ENCODE measurements at regions of chr4 and their contacts with region 1.

Region 1: DNA sequence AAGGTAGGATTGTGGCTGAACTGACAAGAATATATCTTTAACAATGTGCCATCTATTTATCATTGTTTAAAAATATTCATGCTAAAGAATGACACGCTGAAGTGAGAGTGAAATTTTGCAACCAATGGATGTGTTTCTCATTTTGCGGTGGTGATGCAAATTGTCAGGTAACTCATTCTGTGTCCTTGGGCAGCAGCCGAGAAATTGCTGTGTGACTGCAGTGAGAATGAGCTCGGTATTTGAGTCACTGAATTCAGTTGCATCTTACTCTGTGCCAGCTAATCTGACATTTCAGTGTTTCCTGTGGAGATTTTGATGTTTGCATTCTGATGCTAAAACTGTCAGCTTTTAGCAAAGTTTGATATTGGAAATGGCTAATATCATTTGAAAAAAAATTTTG is 28.1 kb downstream of the MCUB start:
- DNase-seq: peak; percentile 88
- H3K4me3 Mint-ChIP-seq: peak overlapping the region; percentile 46
- H3K27ac Mint-ChIP-seq: peak overlapping the region; percentile 78
- H3K4me1 Mint-ChIP-seq: peaks cover 85% of the 10 kb centered on the region
- H3K27me3 Mint-ChIP-seq: no peaks in the 10 kb centered on the region

Region 2: GRCh38 chr4:109233585-109233984 is 354.6 kb before region 1 on chr4:
- CTCF ChIA-PET with region 1: no interaction called
- intact Hi-C with region 1: no loop called
- DNase-seq: no peak
- H3K4me3 Mint-ChIP-seq: no peak overlapping the region
- H3K27ac Mint-ChIP-seq: no peak overlapping the region
- H3K4me1 Mint-ChIP-seq: no peaks in the 10 kb centered on the region
- H3K27me3 Mint-ChIP-seq: no peaks in the 10 kb centered on the region

Region 3: GRCh38 chr4:109601336-109601735 is 13.2 kb after region 1 on chr4:
- CTCF ChIA-PET with region 1: no interaction called
- intact Hi-C with region 1: loop called (anchors 1 kb)
- DNase-seq: no peak
- H3K4me3 Mint-ChIP-seq: no peak overlapping the region
- H3K27ac Mint-ChIP-seq: no peak overlapping the region
- H3K4me1 Mint-ChIP-seq: peaks cover 46% of the 10 kb centered on the region
- H3K27me3 Mint-ChIP-seq: no peaks in the 10 kb centered on the region

Region 4: DNA sequence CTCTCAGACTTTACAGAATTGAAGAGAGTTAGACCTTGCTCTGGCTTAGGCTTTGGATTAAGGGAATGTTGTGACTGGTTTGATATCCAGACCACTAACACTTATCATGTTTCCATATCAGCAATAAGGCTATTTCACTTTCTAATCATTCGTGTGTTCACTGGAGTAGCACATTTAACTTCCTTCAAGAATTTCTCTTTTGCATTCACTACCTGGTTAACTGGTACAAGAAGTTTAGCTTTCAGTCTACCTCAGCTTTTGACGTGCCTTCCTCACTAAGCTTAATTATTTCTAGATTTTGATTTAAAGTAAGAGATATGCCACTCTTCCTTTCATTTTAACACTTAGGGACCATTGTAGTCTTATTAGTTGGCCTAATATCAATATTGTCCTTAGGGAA is 52.5 kb after region 1 on chr4:
- CTCF ChIA-PET with region 1: interaction called, 3 read pairs
- intact Hi-C with region 1: loop called (anchors 1 kb)
- DNase-seq: no peak
- H3K4me3 Mint-ChIP-seq: no peak overlapping the region
- H3K27ac Mint-ChIP-seq: peak overlapping the region; percentile 72
- H3K4me1 Mint-ChIP-seq: peaks cover 48% of the 10 kb centered on the region
- H3K27me3 Mint-ChIP-seq: no peaks in the 10 kb centered on the region

Region 5: GRCh38 chr4:109702950-109703663 is 114.9 kb after region 1 on chr4 and contains the start of gene CASP6:
- CTCF ChIA-PET with region 1: no interaction called
- intact Hi-C with region 1: loop called (anchors 1 kb)
- DNase-seq: peak; percentile 76
- H3K4me3 Mint-ChIP-seq: peak within 1 kb of the TSS; percentile 86
- H3K27ac Mint-ChIP-seq: peak within 1 kb of the TSS; percentile 82
- H3K4me1 Mint-ChIP-seq: peaks cover 28% of the 10 kb centered on the region
- H3K27me3 Mint-ChIP-seq: no peaks in the 10 kb centered on the region
- total RNA-seq, gene CASP6: 11.5 to 12.1 TPM

Region 6: DNA sequence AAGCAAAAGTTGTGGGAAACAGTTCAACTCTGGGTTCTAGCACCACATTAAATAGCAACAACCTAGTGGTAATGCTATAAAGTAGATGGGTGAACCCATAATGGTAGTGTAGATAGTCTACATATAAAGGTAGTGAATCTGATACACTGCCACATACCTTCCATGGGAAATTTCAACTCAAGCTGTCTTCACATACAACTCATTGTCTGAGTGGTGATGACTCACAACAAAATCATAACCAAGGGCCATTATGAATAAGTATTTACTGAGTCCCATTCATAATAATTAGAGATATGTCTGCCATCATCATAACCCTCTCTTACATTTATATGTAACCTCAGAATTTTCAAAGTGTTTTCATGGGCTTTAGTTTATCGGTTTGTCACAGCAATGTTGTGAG is 359.3 kb after region 1 on chr4:
- CTCF ChIA-PET with region 1: no interaction called
- intact Hi-C with region 1: loop called (anchors 2 kb)
- DNase-seq: no peak
- H3K4me3 Mint-ChIP-seq: no peak overlapping the region
- H3K27ac Mint-ChIP-seq: peak overlapping the region; percentile 65
- H3K4me1 Mint-ChIP-seq: peaks cover 27% of the 10 kb centered on the region
- H3K27me3 Mint-ChIP-seq: no peaks in the 10 kb centered on the region

Region 7: GRCh38 chr4:110005461-110006056 is 417.4 kb after region 1 on chr4:
- CTCF ChIA-PET with region 1: no interaction called
- intact Hi-C with region 1: no loop called
- DNase-seq: no peak
- H3K4me3 Mint-ChIP-seq: no peak overlapping the region
- H3K27ac Mint-ChIP-seq: no peak overlapping the region
- H3K4me1 Mint-ChIP-seq: peaks cover 8% of the 10 kb centered on the region
- H3K27me3 Mint-ChIP-seq: peaks cover 3% of the 10 kb centered on the region